Mammary epithelial cell (primary cell): ENCODE measurements at regions of chr7 and their contacts with region 1.

Region 1: DNA sequence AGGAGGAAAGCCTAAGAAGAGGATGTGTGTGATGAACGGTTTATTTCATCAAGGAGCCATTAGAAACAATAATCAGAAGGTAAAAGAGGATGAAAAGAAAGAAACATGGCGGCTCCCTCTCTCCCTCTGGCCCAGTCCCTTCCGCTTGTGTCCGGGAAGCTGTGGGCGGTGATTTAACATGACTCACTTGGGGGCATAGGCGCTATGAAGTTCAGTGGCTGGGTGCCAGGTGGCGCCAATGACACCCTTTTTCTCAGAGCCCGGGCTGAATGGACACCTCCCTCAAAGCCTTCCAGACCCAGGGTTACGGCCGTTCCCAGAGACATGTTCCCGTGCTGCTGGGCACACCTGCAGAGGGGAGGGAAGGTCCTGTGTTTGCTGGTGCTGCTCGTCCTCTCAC is 244.0 kb downstream of the SKAP2 start:
- DNase-seq: no peak
- H3K4me3 ChIP-seq: no peak overlapping the region
- H3K27ac ChIP-seq: no peak overlapping the region
- H3K4me1 ChIP-seq: peaks cover 3% of the 10 kb centered on the region
- H3K27me3 ChIP-seq: no peaks in the 10 kb centered on the region
- CTCF ChIP-seq: no peak

Region 2: DNA sequence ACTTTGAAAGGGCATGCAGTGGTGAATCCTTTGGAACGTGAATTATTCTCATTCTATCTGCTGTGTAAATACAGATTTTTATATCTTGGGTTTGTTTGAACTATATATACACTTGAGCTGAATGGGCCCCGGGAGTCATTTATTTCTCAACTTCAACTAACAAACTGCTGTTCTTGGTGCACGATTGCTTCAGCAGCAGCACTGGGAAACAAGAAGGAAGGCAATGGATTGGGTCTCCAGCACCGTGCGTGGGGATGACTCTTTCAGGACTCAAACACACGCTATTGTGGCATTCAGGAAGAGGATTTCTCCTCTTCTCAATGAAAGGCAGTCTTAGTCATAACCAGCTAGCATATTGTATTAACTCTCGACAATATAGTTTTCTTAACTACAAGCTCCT is 694.3 kb before region 1 on chr7:
- CTCF ChIA-PET with region 1: no interaction called
- dilution Hi-C with region 1: no loop called
- in situ Hi-C with region 1: no loop called
- intact Hi-C with region 1: no loop called
- DNase-seq: peak; percentile 76
- H3K4me3 ChIP-seq: no peak overlapping the region
- H3K27ac ChIP-seq: no peak overlapping the region
- H3K4me1 ChIP-seq: peaks cover 21% of the 10 kb centered on the region
- H3K27me3 ChIP-seq: no peaks in the 10 kb centered on the region
- CTCF ChIP-seq: no peak

Region 3: DNA sequence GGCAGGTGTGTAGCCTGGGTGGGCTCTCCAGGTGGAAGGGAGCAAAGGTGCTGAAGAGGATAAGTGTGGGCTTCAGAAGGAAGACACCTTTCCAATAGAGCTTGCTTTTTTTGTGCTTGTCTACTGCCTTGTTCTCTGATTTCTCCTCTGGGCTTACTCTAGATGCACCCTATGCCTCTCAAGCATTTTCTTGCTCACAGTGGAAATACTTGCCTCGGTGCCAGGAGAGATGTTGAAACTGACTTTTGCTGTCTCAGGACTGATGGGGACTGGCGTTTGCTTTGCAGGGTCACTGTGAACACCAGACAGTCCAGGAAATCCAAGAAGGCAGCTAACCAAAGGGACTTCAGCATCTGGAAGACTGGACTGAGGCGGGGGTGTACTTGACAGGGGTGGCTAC is 140.8 kb before region 1 on chr7:
- CTCF ChIA-PET with region 1: no interaction called
- dilution Hi-C with region 1: loop called (anchors 10 kb)
- in situ Hi-C with region 1: no loop called
- intact Hi-C with region 1: no loop called
- DNase-seq: no peak
- H3K4me3 ChIP-seq: no peak overlapping the region
- H3K27ac ChIP-seq: no peak overlapping the region
- H3K4me1 ChIP-seq: no peaks in the 10 kb centered on the region
- H3K27me3 ChIP-seq: no peaks in the 10 kb centered on the region
- CTCF ChIP-seq: no peak